Activated CD8-positive, alpha-beta memory T cell treated with anti-CD3 and anti-CD28 coated beads, Interleukin-2, amount 10 ng/mL, durations not matched to agents 7 days and 5 days (primary cell): ENCODE measurements at regions of chr2 and their contacts with region 1.

Region 1: GRCh38 chr2:20411361-20411894 is 35.4 kb upstream of the RHOB start:
- DNase-seq: peak; percentile 82
- ATAC-seq: peak; percentile 93
- H3K4me3 Mint-ChIP-seq: no peak overlapping the region
- H3K27ac Mint-ChIP-seq: no peak overlapping the region
- H3K4me1 Mint-ChIP-seq: no peaks in the 10 kb centered on the region
- H3K27me3 Mint-ChIP-seq: peaks cover 39% of the 10 kb centered on the region

Region 2: DNA sequence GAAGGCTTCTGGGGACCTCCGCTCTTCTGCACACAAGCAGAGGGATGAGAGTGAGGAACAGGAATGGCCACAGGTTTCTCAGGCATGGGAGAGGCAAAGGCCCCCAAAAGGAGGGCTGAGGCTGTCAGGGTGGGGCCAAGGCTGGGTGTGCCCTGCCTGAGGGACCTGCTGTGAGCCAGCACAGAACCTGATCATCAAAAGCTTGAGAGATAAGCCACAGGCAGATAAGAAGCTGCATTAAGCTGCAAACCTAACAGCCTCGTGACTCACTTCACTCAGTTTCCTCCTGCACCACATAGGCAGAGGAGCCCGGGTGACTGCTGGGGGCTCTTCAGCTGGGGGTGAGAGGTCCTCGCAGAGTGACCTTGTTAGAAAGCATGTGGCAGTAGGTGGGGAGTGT is 295.5 kb before region 1 on chr2:
- CTCF ChIA-PET with region 1: no interaction called
- DNase-seq: no peak
- ATAC-seq: no peak
- H3K4me3 Mint-ChIP-seq: no peak overlapping the region
- H3K27ac Mint-ChIP-seq: no peak overlapping the region
- H3K4me1 Mint-ChIP-seq: no peaks in the 10 kb centered on the region
- H3K27me3 Mint-ChIP-seq: no peaks in the 10 kb centered on the region

Region 3: DNA sequence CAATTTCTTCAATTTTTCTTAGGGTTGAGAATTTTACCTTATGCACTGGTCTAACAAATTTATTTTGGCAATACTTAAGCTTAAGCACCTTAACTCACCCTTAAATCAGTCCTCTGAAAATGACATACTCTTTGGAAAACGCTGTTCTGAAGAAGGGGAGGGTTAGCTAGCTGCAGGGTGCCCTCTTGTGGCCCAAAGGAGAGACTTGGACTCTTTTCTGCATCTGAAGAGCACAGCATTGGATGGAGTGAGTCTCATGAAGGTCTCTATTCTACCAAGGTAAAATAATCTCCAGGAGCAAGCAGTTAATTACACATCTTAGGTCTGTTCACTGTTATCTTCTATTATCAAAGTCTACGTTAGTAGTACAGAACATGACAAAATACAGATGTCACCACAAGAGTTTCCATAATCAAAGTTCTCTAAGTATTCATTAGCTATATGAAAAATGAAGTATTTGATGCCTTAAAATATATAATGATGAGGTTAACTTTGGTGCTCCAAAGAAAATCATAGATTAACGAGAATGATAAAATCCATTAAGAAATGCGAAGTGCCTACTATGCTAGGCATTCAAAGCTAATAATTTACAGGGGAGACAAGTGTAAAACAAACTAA is 85.2 kb before region 1 on chr2:
- CTCF ChIA-PET with region 1: interaction called, 12 read pairs
- DNase-seq: peak; percentile 67
- ATAC-seq: peak; percentile 81
- H3K4me3 Mint-ChIP-seq: no peak overlapping the region
- H3K27ac Mint-ChIP-seq: peak overlapping the region; percentile 63
- H3K4me1 Mint-ChIP-seq: peaks cover 62% of the 10 kb centered on the region
- H3K27me3 Mint-ChIP-seq: no peaks in the 10 kb centered on the region

Region 4: GRCh38 chr2:20343128-20343527 is 68.3 kb before region 1 on chr2:
- CTCF ChIA-PET with region 1: no interaction called
- DNase-seq: no peak
- ATAC-seq: peak; percentile 64
- H3K4me3 Mint-ChIP-seq: no peak overlapping the region
- H3K27ac Mint-ChIP-seq: no peak overlapping the region
- H3K4me1 Mint-ChIP-seq: peaks cover 64% of the 10 kb centered on the region
- H3K27me3 Mint-ChIP-seq: no peaks in the 10 kb centered on the region

Region 5: DNA sequence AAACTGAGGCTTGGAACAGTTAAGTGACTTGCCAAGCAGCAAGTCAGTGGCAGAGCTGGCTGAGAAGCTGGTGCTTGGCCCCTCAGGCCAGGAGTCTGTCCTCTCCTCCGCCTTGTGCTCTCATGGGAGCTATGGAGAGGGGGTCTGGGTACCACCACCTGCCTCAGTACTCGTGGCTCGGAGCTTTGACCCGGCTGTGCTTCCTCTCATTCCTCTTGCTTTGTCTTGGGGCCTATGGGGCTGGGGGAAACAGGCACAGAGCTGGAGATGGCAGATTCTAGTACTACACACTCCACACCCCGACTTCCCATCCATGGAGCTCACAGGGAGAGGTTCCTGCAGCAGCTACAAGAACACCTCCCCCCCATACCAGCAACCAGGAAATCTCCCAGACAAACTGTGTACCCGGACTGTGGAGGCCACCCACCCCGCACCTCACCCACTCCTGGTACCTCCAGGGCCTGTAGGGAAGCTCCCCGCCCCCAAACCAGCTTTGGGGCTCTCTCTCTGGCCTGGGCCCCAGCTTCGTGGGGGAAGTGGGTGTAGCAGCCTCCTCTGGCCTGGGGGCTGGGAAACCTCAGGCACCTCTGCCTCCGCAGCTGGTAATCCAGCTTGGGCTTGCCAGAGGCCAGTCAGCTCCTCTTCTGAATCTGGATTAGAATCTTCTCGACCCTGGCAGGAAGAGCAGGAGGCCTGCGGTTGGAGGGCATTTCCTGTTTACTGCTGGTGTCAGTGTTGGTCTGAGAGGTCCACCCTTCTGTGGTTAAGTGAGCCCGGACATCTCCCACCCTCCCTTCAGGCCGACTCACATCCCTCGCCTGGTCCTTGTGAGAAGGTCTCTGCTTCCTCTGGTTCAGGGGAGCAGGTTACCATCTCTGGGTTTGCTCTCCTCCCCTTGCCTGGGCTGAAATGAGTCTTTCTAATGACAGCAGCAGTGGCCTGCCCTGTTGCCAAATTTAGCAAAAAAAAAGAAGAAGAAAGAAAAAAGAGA is 13.2 kb after region 1 on chr2:
- CTCF ChIA-PET with region 1: interaction called, 43 read pairs
- DNase-seq: peak; percentile 77
- ATAC-seq: peak; percentile 71
- H3K4me3 Mint-ChIP-seq: no peak overlapping the region
- H3K27ac Mint-ChIP-seq: peak overlapping the region; percentile 82
- H3K4me1 Mint-ChIP-seq: peaks cover 29% of the 10 kb centered on the region
- H3K27me3 Mint-ChIP-seq: peaks cover 6% of the 10 kb centered on the region

Region 6: GRCh38 chr2:20446917-20447436 is 35.5 kb after region 1 on chr2 and contains the start of gene RHOB:
- CTCF ChIA-PET with region 1: interaction called, 13 read pairs
- DNase-seq: peak; percentile 94
- ATAC-seq: peak; percentile 97
- H3K4me3 Mint-ChIP-seq: peak within 1 kb of the TSS; percentile 73
- H3K27ac Mint-ChIP-seq: peak within 1 kb of the TSS; percentile 46
- H3K4me1 Mint-ChIP-seq: peaks cover 6% of the 10 kb centered on the region
- H3K27me3 Mint-ChIP-seq: peaks cover 50% of the 10 kb centered on the region
- total RNA-seq, gene RHOB: 9.1 to 36.4 TPM

Region 7: DNA sequence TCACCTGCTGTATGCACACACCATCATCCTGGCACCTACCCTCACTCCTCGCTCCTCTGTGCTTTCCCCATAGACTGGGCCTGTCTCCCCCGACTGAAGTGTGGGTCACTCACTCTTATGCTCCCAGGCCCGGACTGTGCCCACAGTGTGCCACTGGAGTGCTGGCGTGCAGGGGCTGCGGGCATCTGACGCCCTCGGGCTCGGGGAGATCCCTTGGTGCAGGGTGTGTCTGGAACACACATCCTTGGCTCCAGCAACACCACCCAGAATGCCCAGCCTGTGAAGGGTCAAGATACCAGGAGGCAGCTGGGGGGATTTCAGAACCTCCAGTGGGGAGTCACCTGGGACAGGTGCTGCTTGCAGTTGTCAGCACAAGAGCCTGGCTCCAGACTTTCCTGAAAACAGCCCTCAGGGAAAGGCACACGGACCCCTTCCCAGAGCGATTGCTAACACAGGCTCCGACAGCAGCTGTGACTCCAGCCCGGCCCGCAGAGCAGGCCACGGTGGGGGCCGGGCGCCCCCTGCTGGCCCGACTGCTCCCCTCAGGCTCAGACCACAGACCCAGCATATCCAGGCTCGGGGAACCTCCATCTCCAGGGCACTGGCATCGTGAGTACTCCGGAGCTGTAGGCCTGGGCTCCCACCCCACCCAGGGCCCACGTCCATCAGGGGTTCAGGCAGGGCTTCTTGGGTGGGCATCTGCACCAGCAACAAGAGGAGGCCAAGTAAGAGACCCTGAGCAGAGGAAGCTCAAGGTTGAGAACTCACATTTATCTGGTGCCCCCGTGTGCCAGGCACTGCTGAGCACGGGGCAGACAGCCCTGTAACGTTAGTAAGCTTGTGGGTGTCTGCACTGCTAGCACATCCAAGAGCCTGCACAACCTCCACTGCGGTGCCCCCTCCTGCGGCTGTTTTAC is 230.9 kb after region 1 on chr2:
- CTCF ChIA-PET with region 1: interaction called, 41 read pairs
- DNase-seq: peak; percentile 80
- ATAC-seq: peak; percentile 98
- H3K4me3 Mint-ChIP-seq: no peak overlapping the region
- H3K27ac Mint-ChIP-seq: no peak overlapping the region
- H3K4me1 Mint-ChIP-seq: no peaks in the 10 kb centered on the region
- H3K27me3 Mint-ChIP-seq: no peaks in the 10 kb centered on the region